K562 (cell line): ENCODE measurements at regions of chr2 and their contacts with region 1.

Region 1: DNA sequence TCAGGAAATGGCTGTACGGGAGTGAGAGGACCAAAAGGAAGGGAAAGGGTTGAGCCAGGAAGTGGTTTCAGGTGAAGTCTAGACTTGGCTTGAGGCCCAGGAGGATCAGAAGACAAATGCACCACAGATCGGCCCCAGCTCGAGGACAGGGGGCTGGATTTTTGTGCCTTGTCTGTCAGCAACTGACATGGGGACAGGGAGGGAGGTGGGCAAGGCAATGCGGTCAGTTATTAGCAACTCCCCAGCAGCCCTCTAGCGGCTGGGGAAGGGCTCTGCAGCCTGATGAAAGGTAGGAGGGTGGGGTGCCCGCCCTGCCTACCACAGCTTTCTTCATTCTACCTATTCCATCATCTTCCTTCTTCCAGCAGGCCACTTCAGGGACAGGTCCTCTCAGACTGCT is 50.0 kb downstream of the CPO start:
- DNase-seq: peak; percentile 37 to 48 (median 44)
- ATAC-seq: peak; percentile 94
- H3K4me3 ChIP-seq: no peak overlapping the region
- H3K27ac ChIP-seq: no peak overlapping the region
- H3K4me1 ChIP-seq: no peaks in the 10 kb centered on the region
- H3K27me3 ChIP-seq: no peaks in the 10 kb centered on the region
- CTCF ChIP-seq: peak; percentile 56 to 70 (median 59)
- EP300 ChIP-seq: no peak
- POLR2A ChIP-seq: no peak
- RAD21 ChIP-seq: peak in 1 of 2 experiments; percentile 50; a peak in 2 of 4 replicates

Region 2: DNA sequence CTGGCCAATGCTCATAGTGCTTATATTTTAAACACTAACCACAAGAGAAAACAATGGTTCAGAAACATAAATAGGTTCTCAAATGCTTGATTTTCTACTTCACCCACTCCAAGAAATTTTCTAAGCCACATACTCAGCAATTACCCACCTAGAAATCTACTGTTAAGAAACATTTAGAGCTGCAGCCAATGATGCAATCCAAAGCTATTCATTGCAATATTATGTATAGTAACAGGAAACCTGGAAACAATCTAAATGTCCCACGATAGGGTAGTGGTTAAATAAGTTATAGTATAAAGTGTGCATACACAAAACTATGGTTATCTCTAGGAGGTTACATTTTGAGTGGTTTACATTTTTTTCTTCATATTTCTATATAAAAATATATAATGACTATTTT is 341.3 kb before region 1 on chr2:
- CTCF ChIA-PET with region 1: no interaction called
- POLR2A ChIA-PET with region 1: no interaction called
- in situ Hi-C with region 1: no loop called
- intact Hi-C with region 1: no loop called
- DNase-seq: no peak
- ATAC-seq: no peak
- H3K4me3 ChIP-seq: no peak overlapping the region
- H3K27ac ChIP-seq: no peak overlapping the region
- H3K4me1 ChIP-seq: no peaks in the 10 kb centered on the region
- H3K27me3 ChIP-seq: no peaks in the 10 kb centered on the region
- CTCF ChIP-seq: no peak
- EP300 ChIP-seq: peak; percentile 7; the same call in 1 of the 2 replicates
- POLR2A ChIP-seq: no peak
- RAD21 ChIP-seq: no peak

Region 3: GRCh38 chr2:206693399-206694137 is 295.7 kb before region 1 on chr2:
- CTCF ChIA-PET with region 1: no interaction called
- POLR2A ChIA-PET with region 1: no interaction called
- in situ Hi-C with region 1: no loop called
- intact Hi-C with region 1: loop called (anchors 2 kb)
- DNase-seq: peak; percentile 25 to 59 (median 30)
- ATAC-seq: peak; percentile 81
- H3K4me3 ChIP-seq: no peak overlapping the region
- H3K27ac ChIP-seq: no peak overlapping the region
- H3K4me1 ChIP-seq: no peaks in the 10 kb centered on the region
- H3K27me3 ChIP-seq: no peaks in the 10 kb centered on the region; a peak in 1 of 5 replicates
- CTCF ChIP-seq: peak; percentile 37 to 60 (median 51); a peak in 5 of 6 replicates
- EP300 ChIP-seq: no peak
- POLR2A ChIP-seq: no peak
- RAD21 ChIP-seq: peak; percentile 63 to 69